ENCODE measurements at regions of chr2 and their contacts with region 1.

Region 1: GRCh38 chr2:100610381-100610831 is 47.6 kb downstream of the PDCL3 start:
- DNase-seq: peak; percentile 26 to 38
- ATAC-seq: peak; percentile 46 to 47
- H3K4me3 ChIP-seq: no peak overlapping the region
- H3K27ac ChIP-seq: no peak overlapping the region
- H3K4me1 ChIP-seq: peaks cover 0 to 6% of the 10 kb centered on the region in 2 donors
- H3K27me3 ChIP-seq: no peaks in the 10 kb centered on the region
- CTCF ChIP-seq: peak in 4 of 5 experiments; percentile 34 to 55 (median 50)
- POLR2A ChIP-seq: no peak

Region 2: DNA sequence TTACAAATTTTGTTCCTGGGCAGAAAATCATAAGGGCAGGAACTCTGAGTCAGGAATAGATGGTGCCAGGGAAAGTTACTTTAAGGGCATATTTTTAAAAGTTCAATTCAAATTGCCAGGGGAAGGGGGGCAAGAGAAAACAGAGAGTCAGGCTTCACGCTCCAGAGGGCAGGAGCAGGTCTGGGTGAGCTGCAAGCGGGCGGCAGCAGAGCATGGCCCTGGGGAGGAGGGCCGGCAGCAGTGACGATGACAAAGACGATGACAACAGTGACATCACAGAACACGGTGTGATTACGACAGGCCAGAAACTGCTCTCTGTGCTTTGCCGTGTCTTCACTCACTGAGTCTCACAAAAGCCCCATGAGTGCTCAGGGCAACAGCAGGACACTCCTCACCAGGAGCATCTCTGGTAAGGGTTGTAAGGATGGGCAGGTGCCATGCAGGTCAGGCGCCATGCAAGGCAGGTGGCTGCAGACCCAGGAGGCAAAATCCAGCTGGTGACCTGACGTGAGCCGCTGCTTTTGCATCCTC is 216.2 kb before region 1 on chr2:
- in situ Hi-C with region 1: no loop called
- intact Hi-C with region 1: no loop called
- DNase-seq: no peak
- ATAC-seq: no peak
- H3K4me3 ChIP-seq: no peak overlapping the region
- H3K27ac ChIP-seq: no peak overlapping the region
- H3K4me1 ChIP-seq: no peaks in the 10 kb centered on the region
- H3K27me3 ChIP-seq: no peaks in the 10 kb centered on the region
- CTCF ChIP-seq: no peak
- POLR2A ChIP-seq: no peak

Region 3: DNA sequence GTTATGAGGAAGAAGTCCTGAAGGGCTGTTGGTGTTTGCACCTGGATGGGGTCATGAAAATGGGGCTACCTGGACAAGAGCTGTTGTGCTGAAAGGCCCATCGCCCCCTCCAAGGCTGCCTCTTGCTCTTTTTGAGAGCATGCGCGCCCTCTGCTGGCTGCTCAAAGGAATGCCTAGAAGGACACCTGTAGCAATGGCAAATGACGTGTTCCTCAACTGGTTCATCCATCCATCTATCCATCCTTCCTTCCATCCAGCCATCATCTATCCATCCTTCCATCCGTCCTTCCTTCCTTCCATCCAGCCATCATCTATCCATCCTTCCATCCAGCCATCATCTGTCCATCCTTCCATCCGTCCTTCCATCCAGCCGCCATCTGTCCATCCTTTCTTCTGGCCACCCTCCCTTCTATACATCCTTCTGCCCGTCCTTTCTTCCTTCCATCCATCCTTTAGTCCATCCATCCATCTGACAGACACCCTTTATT is 374.5 kb after region 1 on chr2:
- in situ Hi-C with region 1: loop called (anchors 5 to 10 kb)
- intact Hi-C with region 1: loop called (anchors 1 kb)
- DNase-seq: peak; percentile 53 to 65
- ATAC-seq: peak; percentile 57 to 75
- H3K4me3 ChIP-seq: no peak overlapping the region
- H3K27ac ChIP-seq: no peak overlapping the region
- H3K4me1 ChIP-seq: no peaks in the 10 kb centered on the region
- H3K27me3 ChIP-seq: no peaks in the 10 kb centered on the region
- CTCF ChIP-seq: peak; percentile 82 to 91 (median 88)
- POLR2A ChIP-seq: no peak

Region 4: GRCh38 chr2:100992262-100992661 is 381.9 kb after region 1 on chr2:
- in situ Hi-C with region 1: loop called in 2 of 4 experiments (anchors 10 kb)
- intact Hi-C with region 1: no loop called
- DNase-seq: no peak
- ATAC-seq: no peak
- H3K4me3 ChIP-seq: no peak overlapping the region
- H3K27ac ChIP-seq: no peak overlapping the region
- H3K4me1 ChIP-seq: no peaks in the 10 kb centered on the region
- H3K27me3 ChIP-seq: no peaks in the 10 kb centered on the region
- CTCF ChIP-seq: no peak
- POLR2A ChIP-seq: no peak

Region 5: DNA sequence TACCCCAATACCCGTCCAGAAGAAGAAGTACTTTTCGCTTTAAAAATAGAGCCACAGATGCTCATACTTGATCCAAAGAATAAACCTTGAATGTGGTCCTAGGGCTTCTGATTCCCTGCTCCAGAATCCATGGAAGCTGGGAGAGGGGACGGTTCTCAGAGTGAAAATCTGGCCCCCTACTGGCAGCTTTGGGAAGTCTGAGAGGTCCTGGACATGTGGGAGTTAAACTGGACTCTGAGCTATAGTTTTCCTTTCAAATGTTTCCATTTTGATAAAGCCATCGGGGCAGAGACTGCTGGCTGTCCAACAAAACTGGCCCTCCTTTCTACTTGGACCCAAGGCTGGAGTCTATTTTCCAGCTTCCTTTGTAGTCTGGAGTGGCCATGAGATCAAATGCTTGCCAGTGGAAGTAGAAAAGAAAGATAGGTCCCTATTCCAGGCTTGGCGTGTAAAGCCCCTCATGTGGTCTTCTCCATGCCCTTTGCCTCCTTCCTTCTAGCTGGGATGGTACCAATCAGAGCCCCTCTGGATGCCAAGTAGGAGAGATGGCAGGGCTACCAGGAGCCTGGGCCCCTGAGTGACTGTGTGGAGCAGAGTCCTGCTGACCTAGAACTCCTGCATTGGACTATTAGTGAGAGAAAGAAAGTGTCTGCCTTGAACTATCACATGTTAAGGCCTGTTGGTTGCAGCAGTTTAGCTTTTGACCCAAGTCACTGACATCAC is 578.4 kb after region 1 on chr2:
- in situ Hi-C with region 1: loop called in 1 of 4 experiments (anchors 25 kb)
- intact Hi-C with region 1: no loop called
- DNase-seq: no peak
- ATAC-seq: peak in 1 of 2 donors; percentile 56
- H3K4me3 ChIP-seq: no peak overlapping the region
- H3K27ac ChIP-seq: no peak overlapping the region
- H3K4me1 ChIP-seq: no peaks in the 10 kb centered on the region
- H3K27me3 ChIP-seq: no peaks in the 10 kb centered on the region
- CTCF ChIP-seq: peak in 3 of 5 experiments; percentile 17 to 52 (median 27)
- POLR2A ChIP-seq: no peak

Region 6: DNA sequence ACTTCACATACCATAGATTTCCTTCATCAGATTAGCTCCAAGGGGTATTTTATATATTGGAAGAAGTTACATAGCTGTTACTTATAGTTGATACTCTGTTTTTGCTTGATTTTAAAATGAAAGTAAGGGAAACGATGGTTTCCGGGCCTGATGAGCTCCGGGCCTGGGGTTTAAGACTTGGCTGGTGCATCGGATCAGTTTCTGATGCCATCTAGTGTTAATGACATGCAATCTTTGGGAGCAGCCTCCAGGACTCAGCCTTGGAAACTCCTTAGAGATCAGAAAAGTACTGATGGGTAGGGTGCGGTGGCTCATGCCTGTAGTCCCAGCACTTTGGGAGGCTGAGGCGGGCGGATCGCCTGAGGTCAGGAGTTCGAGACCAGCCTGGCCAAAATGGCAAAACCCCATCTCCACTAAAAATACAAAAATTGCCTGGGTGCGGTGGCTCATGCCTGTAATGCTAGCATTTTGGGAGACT is 595.2 kb after region 1 on chr2:
- in situ Hi-C with region 1: no loop called
- intact Hi-C with region 1: loop called (anchors 10 kb)
- DNase-seq: peak; percentile 24 to 38
- ATAC-seq: peak; percentile 88 to 91
- H3K4me3 ChIP-seq: peak overlapping the region; percentile 13 to 49 (median 29)
- H3K27ac ChIP-seq: no peak overlapping the region
- H3K4me1 ChIP-seq: peaks cover 0 to 3% of the 10 kb centered on the region in 2 donors
- H3K27me3 ChIP-seq: no peaks in the 10 kb centered on the region
- CTCF ChIP-seq: peak in 4 of 5 experiments; percentile 11 to 54 (median 43)
- POLR2A ChIP-seq: no peak

Region 7: GRCh38 chr2:101252408-101253012 is 642.1 kb after region 1 on chr2 and contains the start of gene CNOT11:
- in situ Hi-C with region 1: no loop called
- intact Hi-C with region 1: no loop called
- DNase-seq: peak; percentile 97 to 99
- ATAC-seq: peak; percentile 91 to 93
- H3K4me3 ChIP-seq: peak within 1 kb of the TSS; percentile 72 to 99 (median 84)
- H3K27ac ChIP-seq: peak within 1 kb of the TSS; percentile 81 to 100 (median 94)
- H3K4me1 ChIP-seq: peaks cover 17 to 31% of the 10 kb centered on the region in 2 donors
- H3K27me3 ChIP-seq: no peaks in the 10 kb centered on the region
- CTCF ChIP-seq: no peak
- POLR2A ChIP-seq: peak; percentile 80 to 93
- total RNA-seq, gene CNOT11: 31.2 to 42.0 (median 35.5) TPM

Measured in gastrocnemius medialis (tissue), 4 donors.